Endothelial cell of umbilical vein (primary cell): ENCODE measurements at regions of chrX and their contacts with region 1.

Region 1: DNA sequence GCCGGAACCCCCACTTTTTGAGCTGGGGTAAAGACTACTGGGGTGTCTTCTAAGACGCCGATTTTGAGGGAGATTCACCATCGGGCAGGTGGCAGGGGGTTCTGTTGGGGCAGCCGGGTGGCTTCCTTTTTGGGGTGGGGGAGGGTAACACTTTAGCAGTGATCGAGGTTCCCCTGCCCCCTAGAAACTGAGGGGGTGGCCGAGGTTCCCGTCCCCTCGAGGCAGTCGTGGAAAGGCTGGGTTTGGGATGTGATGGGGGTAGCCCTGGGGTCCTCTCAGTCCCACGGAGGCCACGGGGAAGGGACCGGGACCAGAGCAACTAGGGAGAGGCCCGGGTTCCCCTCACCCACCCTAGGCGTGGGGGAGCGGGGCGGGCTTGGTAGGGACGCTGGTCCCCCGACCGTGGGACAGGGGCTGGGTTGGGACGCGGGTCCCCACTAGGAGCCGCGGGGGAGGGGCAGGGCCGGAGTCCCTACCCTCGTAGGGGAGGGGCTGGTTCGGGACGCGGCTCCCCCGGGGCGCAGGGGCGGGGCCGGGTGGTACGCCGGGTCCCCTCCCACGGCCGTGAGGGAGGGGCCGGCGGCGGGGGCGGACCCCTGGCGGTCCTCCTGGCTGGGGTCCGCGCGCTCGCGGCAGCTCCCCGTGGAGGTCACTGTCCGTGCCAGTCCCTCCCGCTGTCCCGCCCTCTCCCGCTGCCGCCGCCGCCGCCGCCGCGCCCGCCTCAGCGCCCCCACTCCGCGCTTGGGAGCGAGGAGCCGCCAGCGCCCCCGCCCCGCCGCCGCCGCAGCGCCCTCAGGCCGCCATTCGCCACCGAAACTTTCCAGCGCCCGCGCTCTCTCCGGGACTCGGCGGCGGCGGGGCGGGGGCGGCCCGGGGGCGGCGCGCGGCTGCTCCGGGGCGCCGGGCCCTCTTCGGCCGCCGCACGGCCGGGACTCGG is at the start of gene TBL1X:
- DNase-seq: peak; percentile 32
- H3K4me3 ChIP-seq: peak within 1 kb of the TSS; percentile 59 to 79 (median 68)
- H3K27ac ChIP-seq: peak within 1 kb of the TSS; percentile 53
- H3K4me1 ChIP-seq: peaks cover 15% of the 10 kb centered on the region
- H3K27me3 ChIP-seq: no peaks in the 10 kb centered on the region
- CTCF ChIP-seq: no peak
- POLR2A ChIP-seq: no peak
- total RNA-seq, gene TBL1X: 22.1 and 25.3 TPM in 2 replicates

Region 2: DNA sequence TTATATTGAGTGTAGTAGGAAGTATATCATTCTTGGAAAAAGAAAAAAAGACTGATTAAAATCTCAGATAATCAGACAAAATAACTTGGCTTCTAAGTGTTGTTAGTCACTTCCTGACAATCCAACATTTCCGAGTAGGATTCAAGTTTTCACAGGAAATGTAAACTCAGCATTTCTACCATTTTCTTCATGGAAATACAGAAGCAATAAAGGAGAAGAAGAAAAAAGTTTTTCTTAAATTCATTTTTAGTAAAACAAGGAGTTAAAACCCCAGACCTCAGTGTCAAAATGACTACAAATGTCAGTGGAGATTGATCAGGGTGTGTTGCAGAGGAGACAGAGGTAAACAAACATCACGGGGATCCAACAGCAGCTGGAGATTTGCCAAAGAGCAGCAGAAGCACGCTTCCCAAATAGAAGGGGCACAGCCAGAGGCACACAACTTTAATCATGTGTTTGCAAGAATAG is 301.5 kb before region 1 on chrX:
- CTCF ChIA-PET with region 1: no interaction called
- POLR2A ChIA-PET with region 1: no interaction called
- dilution Hi-C with region 1: no loop called
- intact Hi-C with region 1: loop called (anchors 5 kb)
- DNase-seq: peak; percentile 33
- H3K4me3 ChIP-seq: peak overlapping the region in 1 of 3 experiments; percentile 10
- H3K27ac ChIP-seq: peak overlapping the region; percentile 28
- H3K4me1 ChIP-seq: peaks cover 10% of the 10 kb centered on the region
- H3K27me3 ChIP-seq: peaks cover 0 to under 1% of the 10 kb centered on the region in 2 experiments
- CTCF ChIP-seq: no peak
- POLR2A ChIP-seq: no peak

Region 3: GRCh38 chrX:9352694-9353411 is 111.8 kb before region 1 on chrX:
- CTCF ChIA-PET with region 1: no interaction called
- POLR2A ChIA-PET with region 1: no interaction called
- dilution Hi-C with region 1: no loop called
- intact Hi-C with region 1: no loop called
- DNase-seq: no peak
- H3K4me3 ChIP-seq: no peak overlapping the region
- H3K27ac ChIP-seq: no peak overlapping the region
- H3K4me1 ChIP-seq: peaks cover 7% of the 10 kb centered on the region
- H3K27me3 ChIP-seq: no peaks in the 10 kb centered on the region
- CTCF ChIP-seq: no peak
- POLR2A ChIP-seq: no peak

Region 4: DNA sequence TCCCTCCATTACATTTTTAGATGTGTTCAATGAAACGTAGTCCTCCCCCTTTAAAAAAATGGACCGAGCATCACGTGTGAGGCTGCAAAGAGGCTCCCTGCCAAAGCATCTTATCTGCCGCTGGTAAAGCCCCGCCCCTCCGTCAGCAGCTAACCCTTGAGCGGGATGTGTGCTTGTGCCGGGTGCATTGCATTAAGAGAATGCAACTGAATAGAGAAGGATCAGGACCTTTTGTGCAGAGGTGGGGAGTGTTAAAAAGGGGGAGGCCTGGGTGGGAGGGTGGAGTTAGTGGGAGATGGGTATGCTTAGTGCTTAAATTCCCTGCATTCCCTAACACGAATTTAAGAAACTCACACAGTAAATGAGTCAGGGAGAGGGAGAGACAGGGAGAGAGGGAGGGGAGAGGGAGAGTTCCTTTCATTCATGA is 66.2 kb after region 1 on chrX:
- CTCF ChIA-PET with region 1: no interaction called
- POLR2A ChIA-PET with region 1: no interaction called
- dilution Hi-C with region 1: no loop called
- intact Hi-C with region 1: loop called (anchors 1 kb)
- DNase-seq: peak; percentile 68
- H3K4me3 ChIP-seq: no peak overlapping the region
- H3K27ac ChIP-seq: no peak overlapping the region
- H3K4me1 ChIP-seq: peaks cover 27% of the 10 kb centered on the region
- H3K27me3 ChIP-seq: no peaks in the 10 kb centered on the region
- CTCF ChIP-seq: no peak
- POLR2A ChIP-seq: no peak

Region 5: DNA sequence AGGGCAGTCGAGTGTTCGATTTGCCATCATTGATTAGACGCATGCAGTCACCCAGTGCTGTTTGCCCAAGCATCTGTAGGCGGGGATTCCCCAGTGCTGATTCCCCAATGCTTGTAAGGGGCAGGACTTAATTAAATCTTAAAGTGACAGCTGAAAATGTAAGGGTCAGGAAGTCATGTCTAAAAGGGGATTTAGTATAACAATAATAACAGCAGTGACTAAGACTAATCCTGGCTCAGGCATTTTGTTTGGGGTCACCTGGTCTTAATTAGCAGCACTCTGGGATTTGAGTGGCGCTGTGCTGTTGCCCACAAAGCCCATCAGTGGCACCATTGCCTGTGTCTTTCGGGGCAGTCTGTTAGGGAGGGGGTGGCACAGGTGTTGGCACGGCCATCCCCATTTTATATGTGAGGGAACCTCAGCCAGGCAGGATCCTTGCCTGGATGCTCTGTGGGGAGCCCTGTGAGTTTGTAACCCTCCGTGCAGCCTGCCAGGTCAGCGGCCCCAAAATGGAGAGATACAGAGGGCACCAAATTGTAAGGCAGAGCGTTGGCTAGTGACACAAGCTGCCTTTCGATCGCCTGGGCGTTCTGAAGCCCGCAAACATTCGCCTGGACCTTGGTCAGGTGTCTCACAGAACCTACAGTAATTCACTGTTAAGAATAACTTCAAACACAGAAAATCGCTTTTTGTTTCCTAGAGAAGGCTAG is 146.9 kb after region 1 on chrX:
- CTCF ChIA-PET with region 1: interaction called, 3 read pairs
- POLR2A ChIA-PET with region 1: no interaction called
- dilution Hi-C with region 1: no loop called
- intact Hi-C with region 1: loop called (anchors 2 kb)
- DNase-seq: peak; percentile 41
- H3K4me3 ChIP-seq: no peak overlapping the region
- H3K27ac ChIP-seq: peak overlapping the region; percentile 66
- H3K4me1 ChIP-seq: peaks cover 20% of the 10 kb centered on the region
- H3K27me3 ChIP-seq: no peaks in the 10 kb centered on the region
- CTCF ChIP-seq: no peak
- POLR2A ChIP-seq: no peak

Region 6: DNA sequence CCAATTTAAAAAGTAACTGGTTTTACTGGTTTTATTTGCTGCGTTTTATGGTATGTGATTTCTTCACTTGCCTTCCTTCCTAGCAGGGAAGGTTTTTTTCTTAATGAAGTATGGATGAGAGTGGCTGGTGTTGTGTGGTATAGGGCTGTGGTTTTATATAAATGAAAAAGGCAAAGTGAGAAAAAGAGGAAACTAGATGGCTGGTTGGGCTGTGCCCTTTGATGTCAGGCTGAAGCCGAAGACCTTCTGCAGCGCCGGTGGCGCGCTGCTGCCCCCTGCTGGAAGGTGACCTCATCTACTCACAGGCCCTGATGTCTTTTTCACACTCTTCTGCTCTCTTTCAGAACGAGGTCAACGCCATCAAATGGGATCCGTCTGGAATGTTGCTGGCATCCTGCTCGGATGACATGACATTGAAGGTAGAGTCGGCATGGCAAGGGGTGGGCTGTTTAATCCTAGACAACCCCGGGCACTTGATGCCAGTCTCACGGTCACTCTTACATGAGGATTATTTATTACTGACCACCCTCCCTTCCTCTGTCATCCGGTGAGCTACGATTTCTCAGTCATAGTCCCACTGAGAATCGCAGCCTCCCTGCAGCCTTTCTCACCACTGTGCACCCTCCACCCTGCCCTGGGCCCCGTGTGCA is 244.3 kb after region 1 on chrX:
- CTCF ChIA-PET with region 1: no interaction called
- POLR2A ChIA-PET with region 1: no interaction called
- dilution Hi-C with region 1: no loop called
- intact Hi-C with region 1: loop called (anchors 1 kb)
- DNase-seq: peak; percentile 67
- H3K4me3 ChIP-seq: no peak overlapping the region
- H3K27ac ChIP-seq: no peak overlapping the region
- H3K4me1 ChIP-seq: no peaks in the 10 kb centered on the region
- H3K27me3 ChIP-seq: no peaks in the 10 kb centered on the region
- CTCF ChIP-seq: peak; percentile 48 to 79
- POLR2A ChIP-seq: no peak